ENCODE measurements at regions of chr4 and their contacts with region 1.

Region 1: DNA sequence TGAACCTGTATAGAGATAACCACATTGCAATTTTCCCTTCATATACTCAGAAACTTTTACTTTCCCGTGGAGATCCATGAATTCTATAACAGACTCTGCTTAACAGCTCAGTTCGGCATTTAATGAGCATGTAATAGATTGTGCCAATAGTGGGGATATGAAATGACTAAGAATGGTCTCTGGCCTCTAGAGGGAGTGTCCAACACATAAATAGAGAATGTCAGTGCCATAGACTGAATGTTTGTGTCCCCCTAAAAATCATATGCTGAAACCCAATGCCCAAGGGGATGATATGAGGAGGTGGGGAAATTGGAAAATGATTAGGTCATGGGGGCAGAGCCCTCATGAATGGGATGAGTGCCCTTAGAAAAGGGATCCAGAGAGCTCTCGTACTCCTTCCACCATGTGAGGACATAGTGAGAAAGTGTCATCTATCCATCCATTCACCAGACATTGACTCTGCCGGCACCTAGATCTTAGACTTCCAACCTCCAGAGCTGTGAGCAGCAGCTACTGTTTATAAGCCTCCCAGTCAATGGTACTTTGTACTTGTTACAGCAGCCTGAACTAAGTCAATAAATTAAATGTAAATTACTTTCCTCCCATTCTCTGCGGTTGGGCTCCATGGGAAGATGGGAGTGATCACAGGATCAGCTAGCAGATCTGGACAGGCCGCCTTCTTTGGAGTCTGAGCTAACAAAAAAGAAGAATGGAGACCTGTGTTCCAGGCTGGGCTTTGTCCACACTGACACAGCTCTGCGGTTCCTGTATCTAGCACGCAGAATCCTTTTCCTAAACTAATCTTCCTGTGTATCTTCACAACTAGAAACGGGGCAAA is 28.1 kb upstream of the HPSE start:
- DNase-seq: no peak
- H3K4me3 ChIP-seq: no peak overlapping the region
- H3K27ac ChIP-seq: no peak overlapping the region
- H3K4me1 ChIP-seq: peaks cover 0 to 9% of the 10 kb centered on the region in 2 donors
- H3K27me3 ChIP-seq: no peaks in the 10 kb centered on the region
- CTCF ChIP-seq: peak; percentile 23 to 59 (median 48)
- POLR2A ChIP-seq: no peak

Region 2: GRCh38 chr4:82865592-82865991 is 497.1 kb before region 1 on chr4:
- intact Hi-C with region 1: no loop called
- DNase-seq: peak in 1 of 7 donors; percentile 30
- H3K4me3 ChIP-seq: no peak overlapping the region
- H3K27ac ChIP-seq: peak overlapping the region in 2 of 5 donors; percentile 58 to 77
- H3K4me1 ChIP-seq: peaks cover 0 to 16% of the 10 kb centered on the region in 2 donors
- H3K27me3 ChIP-seq: no peaks in the 10 kb centered on the region
- CTCF ChIP-seq: no peak
- POLR2A ChIP-seq: no peak

Region 3: DNA sequence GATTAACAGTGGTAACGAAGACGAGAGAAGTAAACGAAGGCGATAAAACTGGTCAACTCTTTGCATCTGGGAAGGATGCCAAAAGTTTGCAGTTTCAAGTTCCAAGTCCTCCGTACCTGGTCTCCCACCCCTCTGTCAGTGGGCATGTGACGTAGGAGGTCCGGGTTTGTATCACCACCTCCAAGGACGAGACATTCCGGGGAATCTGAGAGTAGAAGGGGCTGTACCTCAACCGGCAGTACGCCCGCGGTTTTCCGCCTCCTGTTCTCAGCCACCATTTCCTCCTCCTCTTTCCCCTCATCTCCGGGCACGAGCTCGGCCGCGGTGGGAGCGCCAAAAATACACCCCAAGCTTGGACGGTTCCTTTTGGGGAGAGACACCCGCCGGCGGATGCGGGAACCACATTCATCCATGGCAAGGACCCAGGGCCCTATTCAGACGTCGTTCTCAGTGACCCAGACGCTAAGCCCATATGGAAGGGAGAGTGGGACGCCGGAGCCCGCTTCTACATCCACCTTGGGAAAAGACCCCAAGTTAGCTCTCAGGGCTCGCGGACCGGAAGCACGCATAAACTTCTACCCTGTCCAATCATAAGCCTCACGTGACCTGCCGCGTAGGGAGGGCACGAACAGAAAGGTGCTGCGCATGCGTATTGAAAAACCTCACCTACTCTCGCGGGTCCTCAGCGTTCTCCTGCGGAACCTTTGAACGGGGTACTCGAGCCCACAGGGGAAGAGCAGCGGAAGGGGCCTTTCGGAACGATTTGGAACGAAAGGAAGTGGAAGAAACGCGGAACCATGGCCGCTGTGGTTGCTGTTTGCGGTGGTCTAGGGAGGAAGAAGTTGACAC is 92.8 kb after region 1 on chr4 and contains the starts of genes HELQ and MRPS18C:
- intact Hi-C with region 1: loop called in 1 of 2 experiments (anchors 10 kb)
- DNase-seq: peak; percentile 96 to 99 (median 99)
- H3K4me3 ChIP-seq: peak within 1 kb of the TSS; percentile 69 to 92 (median 88)
- H3K27ac ChIP-seq: peak within 1 kb of the TSS; percentile 95 to 99 (median 99)
- H3K4me1 ChIP-seq: peaks cover 26 to 49% of the 10 kb centered on the region in 2 donors
- H3K27me3 ChIP-seq: no peaks in the 10 kb centered on the region
- CTCF ChIP-seq: peak in 4 of 6 experiments; percentile 34 to 52 (median 46)
- POLR2A ChIP-seq: peak; percentile 69 to 96
- total RNA-seq, gene HELQ: 21.1 to 80.0 (median 38.9) TPM
- total RNA-seq, gene MRPS18C: 17.2 to 73.1 (median 51.8) TPM

Measured in adrenal gland (tissue), 19 donors.